Mammary epithelial cell (primary cell): ENCODE measurements at regions of chr11 and their contacts with region 1.

Region 1: DNA sequence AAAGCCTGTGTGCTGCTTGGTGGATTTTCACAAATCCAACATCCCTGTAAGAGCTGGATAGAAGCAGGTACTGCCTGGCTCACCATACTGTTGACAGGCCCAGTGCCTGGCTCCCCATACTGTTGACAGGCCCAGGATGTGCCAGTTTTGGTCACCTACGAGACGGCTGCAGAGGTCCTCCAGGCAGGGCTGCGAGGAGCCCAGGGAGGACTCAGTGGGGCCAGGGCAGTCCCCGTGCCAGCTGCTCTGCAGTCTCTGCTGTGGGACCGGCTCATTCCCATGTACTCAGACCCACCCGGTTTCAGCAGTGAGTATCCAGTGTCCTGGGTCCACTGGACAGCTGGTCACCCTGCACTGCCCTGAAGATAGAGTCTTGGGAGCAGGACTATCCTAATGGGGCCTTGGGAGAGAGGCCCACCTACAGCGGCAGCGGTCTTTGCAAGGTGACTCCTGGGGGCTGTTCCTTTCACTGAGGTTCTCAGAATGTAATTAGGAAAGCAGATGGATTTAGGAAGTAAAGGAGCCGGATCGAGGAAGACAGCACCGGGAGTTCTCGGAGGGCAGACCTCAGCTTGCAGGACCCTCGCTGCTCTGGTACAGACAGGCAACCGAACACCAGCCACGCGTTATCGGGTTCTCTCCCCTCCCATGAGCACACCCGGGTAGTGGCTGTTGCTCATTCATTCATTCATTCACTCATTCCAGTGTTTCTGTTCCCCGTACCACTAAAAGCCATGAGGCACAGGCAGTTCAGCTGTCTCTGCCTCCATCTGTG is 106.1 kb downstream of the CTTN start:
- DNase-seq: no peak
- H3K4me3 ChIP-seq: no peak overlapping the region
- H3K27ac ChIP-seq: no peak overlapping the region
- H3K4me1 ChIP-seq: no peaks in the 10 kb centered on the region
- H3K27me3 ChIP-seq: no peaks in the 10 kb centered on the region
- CTCF ChIP-seq: no peak

Region 2: GRCh38 chr11:70544809-70545537 is 40.5 kb after region 1 on chr11:
- CTCF ChIA-PET with region 1: no interaction called
- dilution Hi-C with region 1: loop called (anchors 5 kb)
- in situ Hi-C with region 1: no loop called
- intact Hi-C with region 1: no loop called
- DNase-seq: no peak
- H3K4me3 ChIP-seq: no peak overlapping the region
- H3K27ac ChIP-seq: no peak overlapping the region
- H3K4me1 ChIP-seq: no peaks in the 10 kb centered on the region
- H3K27me3 ChIP-seq: no peaks in the 10 kb centered on the region
- CTCF ChIP-seq: no peak